ENCODE measurements at regions of chr13 and their contacts with region 1.

Region 1: DNA sequence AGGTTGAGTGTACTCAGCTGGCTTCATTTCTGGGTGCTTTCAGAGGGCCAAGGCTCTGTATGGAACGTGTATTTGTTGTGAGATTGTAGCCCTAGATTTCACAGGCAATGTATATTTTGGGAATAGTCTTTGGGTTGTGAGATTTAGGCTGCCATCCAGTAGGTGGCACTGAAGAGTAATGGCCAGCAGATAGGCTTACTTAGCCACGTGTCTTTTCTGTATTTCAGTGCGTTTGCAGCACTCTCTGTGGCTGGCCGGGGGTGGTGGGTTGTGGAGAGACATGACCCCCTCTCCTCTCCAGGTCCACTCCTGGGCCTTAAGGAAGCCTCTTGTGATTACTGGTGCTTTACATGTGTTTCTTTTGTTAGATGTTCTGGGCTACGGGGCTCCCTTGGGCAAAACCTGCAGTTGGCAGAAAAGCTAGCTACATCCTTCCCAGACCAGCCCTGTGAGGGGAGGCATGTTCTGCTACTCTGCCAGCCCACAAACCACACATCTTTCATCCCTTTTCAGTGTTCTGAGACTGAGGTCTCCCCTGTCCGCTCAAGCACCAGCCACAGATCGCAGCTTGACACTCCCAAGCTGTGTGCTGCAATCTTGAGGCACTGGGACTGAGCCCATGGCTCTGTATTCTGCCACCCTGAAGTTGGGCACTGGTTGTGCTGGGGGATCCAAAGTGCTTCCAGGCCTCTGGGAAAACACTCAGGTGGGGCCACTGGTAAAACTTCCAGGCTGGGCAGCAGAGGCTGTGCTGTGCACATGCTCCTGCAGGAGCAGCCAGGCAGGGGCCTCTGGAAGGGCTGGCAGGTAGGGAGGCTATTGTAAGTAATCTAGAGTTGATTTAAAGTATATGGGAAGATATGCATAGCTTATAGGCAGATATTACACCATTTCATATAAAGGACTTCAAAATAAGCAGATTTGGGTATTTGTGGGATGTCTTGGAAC is 1096.8 kb upstream of the PCDH20 start:
- DNase-seq: no peak
- H3K4me3 Mint-ChIP-seq: no peak overlapping the region
- H3K27ac Mint-ChIP-seq: no peak overlapping the region
- H3K4me1 Mint-ChIP-seq: no peaks in the 10 kb centered on the region
- H3K27me3 Mint-ChIP-seq: no peaks in the 10 kb centered on the region

Region 2: GRCh38 chr13:62578402-62578801 is 65.9 kb after region 1 on chr13:
- intact Hi-C with region 1: loop called (anchors 10 kb)
- DNase-seq: no peak
- H3K4me3 Mint-ChIP-seq: no peak overlapping the region
- H3K27ac Mint-ChIP-seq: no peak overlapping the region
- H3K4me1 Mint-ChIP-seq: no peaks in the 10 kb centered on the region
- H3K27me3 Mint-ChIP-seq: no peaks in the 10 kb centered on the region